WTC11 (cell line): ENCODE measurements at regions of chr6 and their contacts with region 1.

Region 1: GRCh38 chr6:97215157-97215769 is 67.8 kb downstream of the MMS22L start:
- DNase-seq: peak; percentile 34
- ATAC-seq: peak; percentile 92
- H3K4me3 Mint-ChIP-seq: no peak overlapping the region
- H3K27ac Mint-ChIP-seq: peak overlapping the region; percentile 37; the same call in 1 of the 2 replicates
- H3K4me1 Mint-ChIP-seq: peaks cover 6% of the 10 kb centered on the region; the same call in 1 of the 2 replicates
- H3K27me3 Mint-ChIP-seq: no peaks in the 10 kb centered on the region
- CTCF ChIP-seq: no peak

Region 2: GRCh38 chr6:97189767-97190166 is 25.5 kb before region 1 on chr6:
- CTCF ChIA-PET with region 1: interaction called, 14 read pairs
- POLR2A ChIA-PET with region 1: no interaction called
- DNase-seq: no peak
- ATAC-seq: no peak
- H3K4me3 Mint-ChIP-seq: no peak overlapping the region
- H3K27ac Mint-ChIP-seq: no peak overlapping the region
- H3K4me1 Mint-ChIP-seq: peaks cover 4% of the 10 kb centered on the region
- H3K27me3 Mint-ChIP-seq: no peaks in the 10 kb centered on the region
- CTCF ChIP-seq: no peak

Region 3: DNA sequence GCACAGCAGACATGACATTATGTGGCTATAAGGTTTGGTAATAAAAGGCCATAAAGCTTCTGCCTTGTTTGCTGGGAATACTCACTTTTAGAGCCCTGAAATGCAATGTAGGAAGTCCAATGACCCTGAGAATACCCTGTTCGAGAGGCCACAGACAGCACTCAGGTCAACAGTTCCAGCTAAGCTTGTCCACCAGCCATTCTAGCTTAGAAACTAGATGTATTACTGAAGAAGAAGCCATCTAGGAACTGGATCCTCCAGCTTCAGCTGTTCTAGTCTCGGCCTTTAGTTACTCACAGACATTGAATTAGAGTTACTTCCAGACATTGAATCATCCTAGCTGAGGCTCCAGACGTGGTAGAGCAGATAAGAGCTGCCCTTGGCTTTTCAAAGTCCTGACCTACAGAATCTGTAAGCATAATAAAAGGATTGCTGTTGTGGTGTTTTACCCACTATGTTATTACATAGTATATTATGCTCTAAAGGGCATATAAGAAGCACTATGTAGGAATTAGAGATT is 17.2 kb before region 1 on chr6:
- CTCF ChIA-PET with region 1: interaction called, 16 read pairs
- POLR2A ChIA-PET with region 1: no interaction called
- DNase-seq: no peak
- ATAC-seq: no peak
- H3K4me3 Mint-ChIP-seq: no peak overlapping the region
- H3K27ac Mint-ChIP-seq: no peak overlapping the region
- H3K4me1 Mint-ChIP-seq: no peaks in the 10 kb centered on the region
- H3K27me3 Mint-ChIP-seq: no peaks in the 10 kb centered on the region
- CTCF ChIP-seq: no peak

Region 4: GRCh38 chr6:97203343-97203742 is 11.9 kb before region 1 on chr6:
- CTCF ChIA-PET with region 1: interaction called, 20 read pairs
- POLR2A ChIA-PET with region 1: interaction called, 3 read pairs
- DNase-seq: no peak
- ATAC-seq: no peak
- H3K4me3 Mint-ChIP-seq: no peak overlapping the region
- H3K27ac Mint-ChIP-seq: no peak overlapping the region
- H3K4me1 Mint-ChIP-seq: peaks cover 19% of the 10 kb centered on the region
- H3K27me3 Mint-ChIP-seq: no peaks in the 10 kb centered on the region
- CTCF ChIP-seq: no peak

Region 5: DNA sequence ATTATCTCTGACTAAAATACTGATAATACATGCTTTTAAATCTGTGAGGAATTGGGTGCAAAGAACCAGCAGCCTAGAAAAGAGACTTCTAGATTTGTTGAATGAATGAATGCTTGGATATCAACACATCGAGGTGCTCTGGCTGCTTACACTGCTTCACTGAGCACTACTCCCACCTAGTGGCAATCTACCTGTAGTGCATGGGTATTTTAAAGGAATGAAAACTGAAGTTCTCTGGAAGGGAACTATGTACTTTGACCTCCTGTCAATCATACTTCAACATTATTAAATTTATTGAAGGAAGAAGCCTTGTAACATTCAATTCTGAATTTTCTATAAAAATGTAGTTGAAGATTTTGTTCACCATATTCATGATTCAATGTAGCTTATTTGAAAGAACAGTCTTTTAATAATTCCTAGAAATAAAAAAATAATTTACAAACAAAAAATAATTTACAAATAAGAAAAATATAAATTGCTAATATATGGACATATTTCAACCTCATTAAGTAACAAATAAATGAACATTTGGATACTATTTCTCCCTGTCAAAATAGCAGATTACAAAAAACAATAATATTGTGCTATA is 179.0 kb after region 1 on chr6:
- CTCF ChIA-PET with region 1: interaction called, 12 read pairs
- POLR2A ChIA-PET with region 1: no interaction called
- DNase-seq: peak; percentile 31
- ATAC-seq: peak; percentile 77
- H3K4me3 Mint-ChIP-seq: no peak overlapping the region
- H3K27ac Mint-ChIP-seq: no peak overlapping the region
- H3K4me1 Mint-ChIP-seq: no peaks in the 10 kb centered on the region; the same call in 1 of the 2 replicates
- H3K27me3 Mint-ChIP-seq: no peaks in the 10 kb centered on the region
- CTCF ChIP-seq: peak; percentile 81